MCF 10A (cell line): ENCODE measurements at regions of chr1 and their contacts with region 1.

Region 1: DNA sequence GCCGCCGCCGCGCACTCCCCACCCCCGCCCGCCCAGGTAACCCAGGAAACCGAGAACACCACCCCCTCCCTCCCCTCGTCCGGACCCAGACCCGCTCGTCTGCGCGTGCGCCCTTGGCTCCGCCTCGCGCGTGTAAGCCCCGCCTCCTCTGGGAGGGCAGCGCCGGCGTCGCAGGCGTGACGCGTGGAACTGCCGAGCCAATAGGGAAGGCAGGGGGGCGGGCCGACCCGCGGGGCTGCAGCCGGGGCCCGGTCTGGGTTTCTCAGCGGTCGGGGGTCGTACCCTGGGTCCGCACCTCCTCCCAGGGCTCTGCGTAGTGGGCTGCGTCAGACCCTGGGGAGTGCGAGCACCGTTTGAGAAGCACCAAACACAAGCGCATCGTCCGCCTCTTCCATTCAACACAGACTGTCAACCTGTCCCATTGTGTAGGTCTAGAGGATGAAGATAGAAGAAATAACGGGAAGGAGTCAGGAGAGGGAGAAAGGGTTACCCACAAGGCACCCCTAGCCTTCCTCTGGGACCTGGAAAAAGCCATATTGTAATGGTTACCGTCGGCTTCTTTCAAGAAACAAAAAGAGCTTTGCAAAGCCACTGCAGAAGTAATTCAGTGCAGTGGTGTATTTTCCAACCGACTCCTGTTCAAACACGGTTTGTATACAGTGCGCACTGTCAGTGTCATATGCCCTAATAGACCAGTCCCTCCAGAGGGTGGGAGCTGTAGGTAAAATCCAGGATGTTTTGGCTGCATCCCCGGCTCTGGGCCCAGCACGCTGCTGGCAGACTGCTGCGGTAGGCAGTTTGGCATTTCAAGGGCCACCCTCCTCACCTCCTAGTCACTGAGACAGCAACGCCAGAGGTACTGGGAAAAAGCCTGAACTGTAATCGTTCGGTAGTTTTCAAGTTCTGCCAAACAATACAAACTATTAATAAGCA is 473 bp upstream of the LYST start:
- DNase-seq: peak; percentile 99
- H3K4me3 Mint-ChIP-seq: peak overlapping the region; percentile 99
- H3K27ac Mint-ChIP-seq: peak overlapping the region; percentile 95
- H3K4me1 Mint-ChIP-seq: peaks cover 35% of the 10 kb centered on the region
- H3K27me3 Mint-ChIP-seq: no peaks in the 10 kb centered on the region
- CTCF ChIP-seq: no peak

Region 2: DNA sequence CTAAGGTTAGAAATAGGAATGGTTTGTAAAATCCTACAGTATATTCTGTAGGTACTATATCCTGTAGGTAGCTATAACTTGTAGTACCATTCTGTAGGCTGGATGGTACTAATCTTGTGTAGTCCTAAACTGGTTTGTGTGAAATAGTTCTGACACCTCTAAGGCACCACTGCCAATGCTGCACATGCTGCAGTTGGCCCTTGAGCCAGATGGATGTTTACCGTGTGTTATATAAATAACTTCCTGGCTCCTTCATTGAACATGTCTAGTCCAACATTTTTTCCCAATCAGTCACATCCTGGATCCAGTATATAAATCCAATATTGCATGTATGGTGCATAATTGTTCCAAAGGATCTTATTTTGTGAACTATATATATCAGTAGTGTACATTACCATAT is 128.1 kb before region 1 on chr1:
- CTCF ChIA-PET with region 1: no interaction called
- POLR2A ChIA-PET with region 1: no interaction called
- intact Hi-C with region 1: no loop called
- DNase-seq: peak; percentile 73
- H3K4me3 Mint-ChIP-seq: no peak overlapping the region
- H3K27ac Mint-ChIP-seq: no peak overlapping the region
- H3K4me1 Mint-ChIP-seq: peaks cover 25% of the 10 kb centered on the region
- H3K27me3 Mint-ChIP-seq: no peaks in the 10 kb centered on the region
- CTCF ChIP-seq: no peak

Region 3: GRCh38 chr1:235843461-235843961 is 23.7 kb before region 1 on chr1:
- CTCF ChIA-PET with region 1: interaction called, 12 read pairs
- POLR2A ChIA-PET with region 1: interaction called, 14 read pairs
- intact Hi-C with region 1: no loop called
- DNase-seq: peak; percentile 76
- H3K4me3 Mint-ChIP-seq: no peak overlapping the region
- H3K27ac Mint-ChIP-seq: no peak overlapping the region
- H3K4me1 Mint-ChIP-seq: no peaks in the 10 kb centered on the region
- H3K27me3 Mint-ChIP-seq: no peaks in the 10 kb centered on the region
- CTCF ChIP-seq: peak; percentile 76

Region 4: GRCh38 chr1:235883261-235883927 is 16.2 kb after region 1 on chr1:
- CTCF ChIA-PET with region 1: interaction called, 14 read pairs
- POLR2A ChIA-PET with region 1: interaction called, 60 read pairs
- intact Hi-C with region 1: no loop called
- DNase-seq: peak; percentile 98
- H3K4me3 Mint-ChIP-seq: peak overlapping the region; percentile 5
- H3K27ac Mint-ChIP-seq: no peak overlapping the region
- H3K4me1 Mint-ChIP-seq: peaks cover 21% of the 10 kb centered on the region
- H3K27me3 Mint-ChIP-seq: no peaks in the 10 kb centered on the region
- CTCF ChIP-seq: no peak

Region 5: DNA sequence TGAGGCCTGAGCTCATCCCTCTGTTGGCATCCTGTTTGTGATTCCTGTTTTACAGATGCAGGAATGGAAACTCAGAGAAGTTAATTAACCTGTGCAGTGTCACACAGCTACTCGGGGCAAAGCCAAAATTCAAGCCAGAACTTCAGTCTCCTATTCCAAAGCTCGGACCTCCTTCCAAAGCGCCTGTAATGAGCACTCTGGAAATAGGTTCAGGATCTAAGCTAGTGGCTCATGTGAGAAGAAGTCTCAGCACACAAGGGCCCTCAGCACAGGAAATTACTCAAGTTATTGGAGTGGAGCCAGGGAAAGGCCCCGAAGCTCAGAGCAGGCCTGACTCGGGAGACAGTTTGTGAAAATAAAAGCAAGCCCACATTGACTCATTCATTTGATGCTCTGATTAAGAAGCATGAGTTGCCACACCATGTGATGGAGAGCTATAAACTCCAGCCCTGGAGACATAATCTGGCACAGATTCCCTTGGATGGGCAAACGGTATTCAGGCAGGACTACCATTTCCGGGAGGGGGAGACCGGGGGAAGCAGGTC is 50.2 kb after region 1 on chr1:
- CTCF ChIA-PET with region 1: interaction called, 33 read pairs
- POLR2A ChIA-PET with region 1: interaction called, 166 read pairs
- intact Hi-C with region 1: loop called (anchors 1 kb)
- DNase-seq: peak; percentile 100
- H3K4me3 Mint-ChIP-seq: peak overlapping the region; percentile 35
- H3K27ac Mint-ChIP-seq: peak overlapping the region; percentile 81
- H3K4me1 Mint-ChIP-seq: peaks cover 55% of the 10 kb centered on the region
- H3K27me3 Mint-ChIP-seq: no peaks in the 10 kb centered on the region
- CTCF ChIP-seq: no peak

Region 6: GRCh38 chr1:235938709-235939479 is 71.7 kb after region 1 on chr1:
- CTCF ChIA-PET with region 1: interaction called, 47 read pairs
- POLR2A ChIA-PET with region 1: interaction called, 102 read pairs
- intact Hi-C with region 1: no loop called
- DNase-seq: no peak
- H3K4me3 Mint-ChIP-seq: no peak overlapping the region
- H3K27ac Mint-ChIP-seq: no peak overlapping the region
- H3K4me1 Mint-ChIP-seq: peaks cover 44% of the 10 kb centered on the region
- H3K27me3 Mint-ChIP-seq: no peaks in the 10 kb centered on the region
- CTCF ChIP-seq: no peak

Region 7: DNA sequence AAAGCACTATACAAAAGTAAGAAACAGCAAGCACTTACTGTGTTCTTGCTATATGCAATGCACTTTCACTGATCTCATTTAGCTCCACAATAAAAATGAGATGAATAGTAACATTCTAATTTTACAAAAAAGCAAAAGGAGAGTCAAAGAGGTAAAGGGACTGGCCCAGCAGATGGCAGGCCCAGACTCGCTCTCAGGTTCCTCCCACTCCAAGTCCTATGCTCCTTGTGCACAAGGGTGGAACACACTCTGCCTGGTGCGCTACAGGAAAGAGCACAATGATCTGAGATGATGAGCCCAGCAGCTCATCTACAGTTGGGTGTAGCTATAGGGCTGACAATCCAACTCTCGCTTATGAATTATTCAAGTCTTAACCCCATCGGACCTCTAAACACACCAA is 93.6 kb after region 1 on chr1:
- CTCF ChIA-PET with region 1: interaction called, 24 read pairs
- POLR2A ChIA-PET with region 1: interaction called, 26 read pairs
- intact Hi-C with region 1: no loop called
- DNase-seq: peak; percentile 61
- H3K4me3 Mint-ChIP-seq: no peak overlapping the region
- H3K27ac Mint-ChIP-seq: peak overlapping the region; percentile 17
- H3K4me1 Mint-ChIP-seq: peaks cover 11% of the 10 kb centered on the region
- H3K27me3 Mint-ChIP-seq: no peaks in the 10 kb centered on the region
- CTCF ChIP-seq: no peak